Endothelial cell of umbilical vein (primary cell): ENCODE measurements at regions of chr1 and their contacts with region 1.

Region 1: DNA sequence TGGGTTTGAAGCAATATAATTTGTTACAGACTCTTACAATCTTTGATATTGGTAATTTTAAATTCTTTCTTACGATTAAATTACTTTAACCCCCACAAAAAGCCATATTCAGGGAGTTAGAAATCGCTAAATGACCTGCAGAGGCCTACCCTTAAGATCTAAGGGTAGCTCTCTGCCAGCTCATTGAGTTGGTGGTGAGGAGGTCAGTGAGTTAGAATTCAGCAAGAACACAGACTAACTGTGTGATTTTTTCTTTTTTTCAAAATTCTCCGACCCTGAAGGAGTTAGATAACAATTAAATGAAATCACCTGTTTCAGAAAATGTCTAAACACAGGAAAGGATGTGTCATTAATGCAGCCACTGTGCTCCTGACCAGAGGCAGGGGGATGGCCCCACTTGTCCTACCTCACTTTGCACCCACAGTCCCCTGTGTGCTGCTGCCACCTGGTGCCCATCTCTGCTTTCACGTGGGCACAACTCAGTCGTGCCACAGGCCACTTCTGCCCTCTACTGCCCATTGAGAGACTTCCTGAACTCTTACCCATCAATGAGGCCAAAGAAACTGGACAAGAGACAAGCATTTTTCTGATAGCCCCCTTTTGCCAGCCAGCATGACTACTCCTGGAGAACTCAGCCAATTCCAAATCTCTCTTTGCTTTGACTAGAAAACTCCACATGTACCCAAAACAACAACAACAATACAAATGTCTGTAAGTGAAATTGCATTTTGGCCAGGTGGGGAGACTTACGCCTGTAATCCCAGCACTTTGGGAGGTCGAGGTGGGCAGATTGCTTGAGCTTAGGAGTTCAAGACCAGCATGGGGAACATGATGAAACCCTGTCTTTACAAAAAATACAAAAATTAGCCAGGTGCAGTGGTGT is 8.4 kb downstream of the CFAP45 start:
- DNase-seq: peak; percentile 95
- H3K4me3 ChIP-seq: no peak overlapping the region
- H3K27ac ChIP-seq: peak overlapping the region; percentile 27
- H3K4me1 ChIP-seq: peaks cover 21% of the 10 kb centered on the region
- H3K27me3 ChIP-seq: no peaks in the 10 kb centered on the region
- CTCF ChIP-seq: peak; percentile 97 to 99
- POLR2A ChIP-seq: no peak

Region 2: DNA sequence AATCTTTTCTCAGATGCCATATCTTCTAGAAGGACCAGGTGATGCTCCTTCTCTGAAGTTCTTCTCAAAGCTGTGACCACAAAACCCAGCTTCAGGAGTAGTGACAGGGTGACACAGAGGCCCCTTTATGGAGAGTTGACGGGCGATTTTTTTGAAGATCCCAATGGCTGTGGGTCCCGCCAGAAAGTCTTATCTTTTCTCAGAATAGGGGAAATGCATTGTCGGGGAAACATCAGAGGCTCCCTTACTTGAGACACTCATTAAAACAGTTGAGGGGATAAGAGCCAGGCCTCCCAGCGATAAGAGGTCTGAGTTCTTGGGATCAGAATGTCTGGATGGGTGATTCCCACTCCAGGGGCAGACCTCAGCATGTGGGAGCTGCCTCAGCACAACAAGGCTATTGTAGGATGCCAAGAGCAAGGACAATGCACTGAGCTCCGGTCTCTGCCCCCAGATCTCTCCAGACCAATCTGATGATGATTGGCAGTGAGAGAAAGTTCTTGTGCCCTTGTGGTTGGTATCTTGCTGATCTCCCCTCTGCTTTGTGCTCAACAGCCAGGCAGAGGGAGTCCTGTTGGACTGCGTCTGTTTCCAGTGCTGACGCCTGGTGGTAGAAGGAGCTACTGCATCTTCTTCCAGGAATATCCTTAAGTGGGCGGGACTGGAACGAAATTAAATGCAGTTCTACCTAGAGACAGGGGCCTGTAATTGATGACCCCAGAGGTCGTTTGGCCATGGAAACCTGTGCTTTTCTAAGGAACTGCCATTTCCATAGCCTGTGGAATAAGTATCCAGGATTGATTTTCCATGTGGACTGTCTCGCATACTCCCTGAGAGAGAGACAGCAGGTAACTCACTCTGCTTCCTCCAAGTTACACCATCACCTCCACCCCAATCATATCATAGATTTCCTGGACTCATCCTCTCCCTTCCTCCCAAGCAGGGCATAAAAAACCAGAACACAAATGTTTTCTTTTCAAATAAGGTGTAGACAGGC is 693.7 kb before region 1 on chr1:
- CTCF ChIA-PET with region 1: interaction called, 17 read pairs
- POLR2A ChIA-PET with region 1: no interaction called
- dilution Hi-C with region 1: no loop called
- intact Hi-C with region 1: no loop called
- DNase-seq: peak; percentile 81
- H3K4me3 ChIP-seq: no peak overlapping the region
- H3K27ac ChIP-seq: no peak overlapping the region
- H3K4me1 ChIP-seq: no peaks in the 10 kb centered on the region
- H3K27me3 ChIP-seq: no peaks in the 10 kb centered on the region
- CTCF ChIP-seq: peak; percentile 85 to 87
- POLR2A ChIP-seq: no peak

Region 3: GRCh38 chr1:159598196-159598595 is 293.3 kb before region 1 on chr1:
- CTCF ChIA-PET with region 1: interaction called, 3 read pairs
- POLR2A ChIA-PET with region 1: no interaction called
- dilution Hi-C with region 1: no loop called
- intact Hi-C with region 1: loop called (anchors 2 kb)
- DNase-seq: peak; percentile 72
- H3K4me3 ChIP-seq: no peak overlapping the region
- H3K27ac ChIP-seq: peak overlapping the region; percentile 99
- H3K4me1 ChIP-seq: peaks cover 40% of the 10 kb centered on the region
- H3K27me3 ChIP-seq: no peaks in the 10 kb centered on the region
- CTCF ChIP-seq: no peak
- POLR2A ChIP-seq: peak; percentile 45

Region 4: GRCh38 chr1:159798893-159799292 is 92.6 kb before region 1 on chr1:
- CTCF ChIA-PET with region 1: interaction called, 623 read pairs
- POLR2A ChIA-PET with region 1: interaction called, 4 read pairs
- dilution Hi-C with region 1: loop called (anchors 5 kb)
- intact Hi-C with region 1: loop called (anchors 1 kb)
- DNase-seq: peak; percentile 85
- H3K4me3 ChIP-seq: no peak overlapping the region
- H3K27ac ChIP-seq: no peak overlapping the region
- H3K4me1 ChIP-seq: no peaks in the 10 kb centered on the region
- H3K27me3 ChIP-seq: no peaks in the 10 kb centered on the region
- CTCF ChIP-seq: peak; percentile 75 to 77
- POLR2A ChIP-seq: no peak

Region 5: DNA sequence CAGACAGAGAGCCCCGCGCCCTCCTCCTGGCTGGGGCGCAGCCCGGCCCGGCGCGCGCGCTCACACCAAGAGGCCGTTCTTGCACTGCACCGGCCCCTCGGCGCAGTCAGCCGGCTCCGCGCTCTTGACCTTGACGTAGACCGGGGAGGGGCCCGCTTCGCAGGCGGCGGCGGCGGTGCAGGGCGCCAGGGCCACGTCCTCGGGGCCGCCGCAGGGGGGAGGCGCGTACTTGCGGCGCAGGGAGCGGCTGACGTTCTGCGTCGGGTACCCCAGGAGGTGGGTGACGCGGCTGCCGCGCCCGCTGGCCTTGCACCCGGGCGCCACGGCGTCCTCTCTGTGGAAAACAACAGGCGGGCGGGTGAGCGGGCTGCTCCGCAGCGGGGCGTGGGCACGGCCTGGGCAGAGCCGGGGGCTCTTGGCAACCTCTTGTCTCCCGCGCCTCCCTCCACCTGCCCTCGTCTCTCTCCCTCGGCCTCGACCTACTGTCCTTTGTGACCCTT is 36.8 kb before region 1 on chr1:
- CTCF ChIA-PET with region 1: interaction called, 26 read pairs
- POLR2A ChIA-PET with region 1: interaction called, 3 read pairs
- dilution Hi-C with region 1: no loop called
- intact Hi-C with region 1: loop called (anchors 1 kb)
- DNase-seq: peak; percentile 78
- H3K4me3 ChIP-seq: peak overlapping the region; percentile 54 to 60 (median 57)
- H3K27ac ChIP-seq: peak overlapping the region; percentile 24
- H3K4me1 ChIP-seq: peaks cover 16% of the 10 kb centered on the region
- H3K27me3 ChIP-seq: no peaks in the 10 kb centered on the region
- CTCF ChIP-seq: no peak
- POLR2A ChIP-seq: peak; percentile 51

Region 6: GRCh38 chr1:160006312-160006940 is 114.9 kb after region 1 on chr1:
- CTCF ChIA-PET with region 1: interaction called, 153 read pairs
- POLR2A ChIA-PET with region 1: no interaction called
- dilution Hi-C with region 1: no loop called
- intact Hi-C with region 1: loop called (anchors 1 kb)
- DNase-seq: peak; percentile 55
- H3K4me3 ChIP-seq: no peak overlapping the region
- H3K27ac ChIP-seq: no peak overlapping the region
- H3K4me1 ChIP-seq: no peaks in the 10 kb centered on the region
- H3K27me3 ChIP-seq: peaks cover 16 to 19% of the 10 kb centered on the region in 2 experiments
- CTCF ChIP-seq: peak; percentile 86 to 91
- POLR2A ChIP-seq: no peak

Region 7: GRCh38 chr1:160400223-160400645 is 508.7 kb after region 1 on chr1 and contains the start of gene VANGL2:
- CTCF ChIA-PET with region 1: no interaction called
- POLR2A ChIA-PET with region 1: no interaction called
- dilution Hi-C with region 1: no loop called
- intact Hi-C with region 1: no loop called
- DNase-seq: no peak
- H3K4me3 ChIP-seq: no peak within 1 kb of the TSS
- H3K27ac ChIP-seq: no peak within 1 kb of the TSS
- H3K4me1 ChIP-seq: peaks cover 13% of the 10 kb centered on the region
- H3K27me3 ChIP-seq: peaks cover 73 to 87% of the 10 kb centered on the region in 2 experiments
- CTCF ChIP-seq: no peak
- POLR2A ChIP-seq: no peak
- total RNA-seq, gene VANGL2: not detected in 2 replicates

Region 8: DNA sequence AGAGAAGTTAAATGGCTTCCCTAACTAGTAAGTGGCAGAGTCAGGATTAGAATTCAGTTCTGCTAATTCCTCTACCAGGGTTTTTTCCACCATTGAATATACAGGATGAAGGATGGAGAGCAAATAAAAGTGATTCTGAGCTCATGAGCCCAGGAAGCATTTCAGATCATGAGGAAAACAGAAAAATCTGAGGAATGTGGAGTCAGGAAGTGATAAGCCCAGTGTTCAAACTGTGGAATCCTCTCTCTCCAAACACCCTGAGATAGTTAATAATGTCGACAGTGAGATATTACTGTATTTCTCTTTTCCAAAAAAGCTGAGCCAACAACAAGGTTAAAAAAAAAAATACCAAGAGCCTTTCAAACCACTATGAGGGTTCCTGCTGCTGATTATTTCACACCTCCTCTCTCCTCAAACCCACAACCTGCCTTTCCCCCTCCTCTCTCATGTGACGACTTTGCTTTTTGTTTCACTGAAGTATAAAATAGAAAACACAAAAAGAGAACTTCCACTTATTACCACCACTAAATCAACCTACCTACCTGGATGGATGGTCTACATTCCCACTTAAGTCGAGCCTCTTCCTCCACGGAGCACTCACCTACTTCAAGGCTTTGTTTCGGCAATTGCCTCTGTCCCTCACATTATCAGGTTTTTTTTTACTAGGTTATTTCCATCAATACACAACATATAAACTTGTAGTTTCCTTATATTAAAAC is 746.5 kb after region 1 on chr1:
- CTCF ChIA-PET with region 1: no interaction called
- POLR2A ChIA-PET with region 1: no interaction called
- dilution Hi-C with region 1: no loop called
- intact Hi-C with region 1: no loop called
- DNase-seq: peak; percentile 10
- H3K4me3 ChIP-seq: no peak overlapping the region
- H3K27ac ChIP-seq: no peak overlapping the region
- H3K4me1 ChIP-seq: peaks cover 9% of the 10 kb centered on the region
- H3K27me3 ChIP-seq: no peaks in the 10 kb centered on the region
- CTCF ChIP-seq: no peak
- POLR2A ChIP-seq: no peak